CD14-positive monocyte (primary cell): ENCODE measurements at regions of chrX and their contacts with region 1.

Region 1: DNA sequence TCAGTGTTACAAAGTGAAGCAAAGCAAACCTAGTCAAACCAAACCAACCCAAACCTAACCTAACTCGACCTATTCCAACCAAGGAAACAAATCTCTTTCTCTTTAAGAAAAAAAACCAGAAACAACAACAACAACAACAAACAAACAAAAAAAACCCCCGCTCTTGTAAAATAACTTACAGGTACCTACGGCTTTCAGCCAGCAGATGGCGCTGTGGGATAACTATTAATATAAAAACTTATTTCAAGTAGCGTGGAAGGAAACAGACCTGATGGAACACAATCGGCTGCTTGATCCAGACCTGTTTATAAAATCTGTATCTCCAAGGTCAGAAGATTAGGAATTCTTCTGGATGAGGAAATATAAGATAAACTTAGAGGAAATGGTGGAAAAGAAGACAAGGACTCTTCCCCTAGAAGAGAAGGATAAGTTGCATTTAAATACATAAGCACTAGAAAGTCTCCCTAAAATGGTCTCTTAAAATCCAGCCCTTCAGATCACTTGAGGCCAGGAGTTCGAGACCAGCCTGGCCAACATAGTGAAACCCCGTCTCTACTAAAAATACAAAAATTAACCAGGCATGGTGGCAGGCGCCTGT is 34.4 kb upstream of the CDKL5 start:
- DNase-seq: peak; percentile 47 to 59 (median 51)
- H3K4me3 ChIP-seq: no peak overlapping the region
- H3K4me3 Mint-ChIP-seq: peak overlapping the region in 1 of 2 donors; percentile 51
- H3K27ac ChIP-seq: no peak overlapping the region
- H3K27ac Mint-ChIP-seq: peak overlapping the region in 1 of 7 donors; percentile 63
- H3K4me1 ChIP-seq: no peaks in the 10 kb centered on the region
- H3K4me1 Mint-ChIP-seq: no peaks in the 10 kb centered on the region
- H3K27me3 ChIP-seq: no peaks in the 10 kb centered on the region
- H3K27me3 Mint-ChIP-seq: peaks cover 0 to 2% (median 0%) of the 10 kb centered on the region in 3 donors
- CTCF ChIP-seq: peak; percentile 61

Region 2: DNA sequence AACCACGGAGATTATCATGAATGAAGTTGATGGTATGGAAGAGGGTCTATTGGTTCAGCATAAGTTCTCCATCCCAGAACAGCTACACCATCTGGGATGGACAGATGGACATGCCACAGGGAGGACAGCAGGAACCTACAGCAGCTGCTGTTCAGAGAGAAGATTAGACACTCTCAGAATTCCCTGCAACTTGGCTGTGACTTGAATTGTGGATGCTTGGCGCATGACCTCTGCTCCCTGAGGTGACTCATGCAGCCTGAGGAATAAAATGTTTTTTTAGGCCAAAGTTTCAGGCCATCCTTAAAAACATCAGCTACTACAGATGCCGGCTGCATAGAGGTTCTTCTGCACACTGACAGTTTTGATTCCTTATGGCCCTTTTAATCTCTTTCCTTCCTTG is 183.6 kb after region 1 on chrX:
- intact Hi-C with region 1: no loop called
- DNase-seq: no peak
- H3K4me3 ChIP-seq: no peak overlapping the region
- H3K4me3 Mint-ChIP-seq: no peak overlapping the region
- H3K27ac ChIP-seq: no peak overlapping the region
- H3K27ac Mint-ChIP-seq: no peak overlapping the region
- H3K4me1 ChIP-seq: no peaks in the 10 kb centered on the region
- H3K4me1 Mint-ChIP-seq: no peaks in the 10 kb centered on the region
- H3K27me3 ChIP-seq: no peaks in the 10 kb centered on the region
- H3K27me3 Mint-ChIP-seq: peaks cover 0 to 2% (median 0%) of the 10 kb centered on the region in 3 donors
- CTCF ChIP-seq: no peak

Region 3: DNA sequence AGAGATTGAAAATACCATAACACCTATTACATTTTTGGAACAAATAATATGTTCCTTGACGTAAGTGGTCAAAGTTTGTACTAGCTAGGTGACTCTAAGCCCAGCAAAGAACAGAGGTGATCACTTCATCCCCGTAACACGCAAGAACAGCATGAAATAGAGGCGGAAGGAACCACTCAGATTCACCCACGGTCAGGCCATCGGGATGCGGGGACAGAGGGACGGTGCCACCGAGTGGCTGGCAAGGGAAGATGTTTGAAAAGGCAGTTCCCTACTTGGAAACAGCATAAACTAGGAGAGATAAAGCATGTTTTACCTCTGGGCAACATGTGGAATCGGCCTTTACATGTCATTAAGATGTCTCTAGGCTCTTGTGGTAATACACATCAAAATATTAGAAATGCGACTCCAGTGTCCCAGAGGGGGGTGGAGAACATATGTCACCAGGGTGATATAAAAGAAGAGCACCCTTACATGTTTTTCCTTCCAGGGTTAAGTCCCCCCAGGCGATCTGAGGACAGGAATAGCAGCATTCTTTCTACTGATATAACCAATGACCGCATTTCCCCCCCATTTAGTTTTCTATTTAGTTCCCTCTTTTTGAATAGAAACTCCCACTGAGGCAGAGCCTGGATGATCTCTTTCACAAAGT is 508.9 kb after region 1 on chrX:
- intact Hi-C with region 1: loop called (anchors 5 to 10 kb)
- DNase-seq: no peak
- H3K4me3 ChIP-seq: no peak overlapping the region
- H3K4me3 Mint-ChIP-seq: no peak overlapping the region
- H3K27ac ChIP-seq: no peak overlapping the region
- H3K27ac Mint-ChIP-seq: no peak overlapping the region
- H3K4me1 ChIP-seq: no peaks in the 10 kb centered on the region
- H3K4me1 Mint-ChIP-seq: no peaks in the 10 kb centered on the region
- H3K27me3 ChIP-seq: no peaks in the 10 kb centered on the region
- H3K27me3 Mint-ChIP-seq: peaks cover 0 to 6% (median 0%) of the 10 kb centered on the region in 3 donors
- CTCF ChIP-seq: no peak